Heart left ventricle (tissue), 16 donors: ENCODE measurements at regions of chr1 and their contacts with region 1.

Region 1: DNA sequence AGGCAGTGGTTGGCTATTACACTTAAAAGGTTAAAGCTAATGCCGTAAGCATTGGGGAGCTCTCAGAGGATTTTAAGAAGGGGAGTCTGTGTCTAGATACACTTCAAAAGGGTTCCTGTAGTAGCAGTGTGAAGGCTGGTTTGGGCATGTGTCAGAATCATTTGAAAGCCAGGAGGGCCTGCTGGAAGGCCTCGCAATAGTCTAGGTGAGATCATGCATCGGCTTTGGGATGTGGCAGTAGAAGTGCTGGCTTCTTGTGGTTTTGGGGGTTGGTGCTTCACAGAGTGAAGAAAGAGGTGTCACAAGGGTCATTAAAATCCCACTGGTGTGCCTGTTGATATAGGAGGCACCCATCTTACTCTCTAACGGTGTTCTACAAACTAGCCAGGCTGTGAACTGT is 85.7 kb downstream of the ST6GALNAC3 start:
- DNase-seq: no peak
- ATAC-seq: no peak
- H3K4me3 ChIP-seq: no peak overlapping the region
- H3K27ac ChIP-seq: no peak overlapping the region
- H3K4me1 ChIP-seq: peaks cover 0 to 1% (median 0%) of the 10 kb centered on the region in 12 donors
- H3K27me3 ChIP-seq: no peaks in the 10 kb centered on the region
- CTCF ChIP-seq: no peak
- POLR2A ChIP-seq: no peak

Region 2: GRCh38 chr1:76225526-76225925 is 65.3 kb after region 1 on chr1:
- intact Hi-C with region 1: loop called in 1 of 10 experiments (anchors 10 kb)
- DNase-seq: no peak
- ATAC-seq: no peak
- H3K4me3 ChIP-seq: no peak overlapping the region
- H3K27ac ChIP-seq: no peak overlapping the region
- H3K4me1 ChIP-seq: peaks cover 0 to 22% (median 2%) of the 10 kb centered on the region in 12 donors
- H3K27me3 ChIP-seq: no peaks in the 10 kb centered on the region
- CTCF ChIP-seq: no peak
- POLR2A ChIP-seq: no peak

Region 3: DNA sequence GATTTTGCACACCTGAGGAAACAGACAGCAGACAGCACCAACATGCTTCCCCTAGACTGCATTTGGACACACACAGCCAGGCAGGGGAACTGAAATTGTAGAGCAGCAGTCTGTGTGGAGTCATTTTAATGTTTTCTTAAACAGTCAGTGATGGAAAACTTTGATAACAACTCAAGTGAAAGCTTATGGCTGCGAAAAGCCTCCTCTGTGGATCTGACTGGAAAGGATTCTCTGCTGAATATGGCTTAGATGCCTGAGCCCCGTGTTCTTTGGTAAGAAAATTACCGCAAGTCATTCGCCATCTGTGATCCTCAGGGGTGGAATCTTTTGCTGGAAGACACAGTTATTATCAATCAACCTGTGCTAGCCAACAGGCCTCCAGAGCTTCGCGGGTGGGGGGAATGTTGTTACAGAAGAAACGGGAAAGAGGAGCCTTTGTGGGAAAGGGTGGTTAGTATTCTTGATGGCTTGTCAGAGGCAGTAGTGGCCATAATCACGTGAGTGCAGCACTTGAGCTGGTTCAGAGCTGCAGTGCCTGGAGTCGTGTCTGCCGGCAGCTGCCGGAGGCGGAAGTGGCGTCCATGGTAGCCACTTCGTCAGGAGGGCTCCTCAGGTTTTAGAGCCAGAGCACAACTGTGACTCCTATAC is 119.0 kb after region 1 on chr1:
- intact Hi-C with region 1: loop called in 1 of 10 experiments (anchors 10 kb)
- DNase-seq: no peak
- ATAC-seq: no peak
- H3K4me3 ChIP-seq: no peak overlapping the region
- H3K27ac ChIP-seq: no peak overlapping the region
- H3K4me1 ChIP-seq: no peaks in the 10 kb centered on the region
- H3K27me3 ChIP-seq: no peaks in the 10 kb centered on the region
- CTCF ChIP-seq: no peak
- POLR2A ChIP-seq: no peak